Pancreas (tissue), 10 donors: ENCODE measurements at regions of chr13 and their contacts with region 1.

Region 1: GRCh38 chr13:75876360-75877050 is 240.4 kb downstream of the LMO7 start:
- DNase-seq: peak in 4 of 6 donors; percentile 23 to 66 (median 34)
- ATAC-seq: peak; percentile 91 to 98 (median 94)
- H3K4me3 ChIP-seq: no peak overlapping the region
- H3K27ac ChIP-seq: no peak overlapping the region
- H3K4me1 ChIP-seq: no peaks in the 10 kb centered on the region
- H3K27me3 ChIP-seq: no peaks in the 10 kb centered on the region
- CTCF ChIP-seq: peak; percentile 62 to 93 (median 86)

Region 2: GRCh38 chr13:76148926-76149325 is 272.4 kb after region 1 on chr13:
- intact Hi-C with region 1: no loop called
- DNase-seq: no peak
- ATAC-seq: peak in 1 of 4 donors; percentile 23
- H3K4me3 ChIP-seq: no peak overlapping the region
- H3K27ac ChIP-seq: no peak overlapping the region
- H3K4me1 ChIP-seq: no peaks in the 10 kb centered on the region
- H3K27me3 ChIP-seq: no peaks in the 10 kb centered on the region
- CTCF ChIP-seq: no peak

Region 3: GRCh38 chr13:76466043-76466442 is 589.5 kb after region 1 on chr13:
- intact Hi-C with region 1: loop called (anchors 5 to 10 kb)
- DNase-seq: no peak
- ATAC-seq: no peak
- H3K4me3 ChIP-seq: no peak overlapping the region
- H3K27ac ChIP-seq: no peak overlapping the region
- H3K4me1 ChIP-seq: no peaks in the 10 kb centered on the region
- H3K27me3 ChIP-seq: no peaks in the 10 kb centered on the region
- CTCF ChIP-seq: no peak

Region 4: GRCh38 chr13:76473552-76474134 is 597.1 kb after region 1 on chr13:
- intact Hi-C with region 1: loop called (anchors 5 to 10 kb)
- DNase-seq: peak in 5 of 6 donors; percentile 54 to 81 (median 57)
- ATAC-seq: peak; percentile 88 to 99 (median 98)
- H3K4me3 ChIP-seq: no peak overlapping the region
- H3K27ac ChIP-seq: no peak overlapping the region
- H3K4me1 ChIP-seq: no peaks in the 10 kb centered on the region
- H3K27me3 ChIP-seq: no peaks in the 10 kb centered on the region
- CTCF ChIP-seq: peak; percentile 74 to 89 (median 82)

Region 5: GRCh38 chr13:76903544-76904162 is 1027.1 kb after region 1 on chr13:
- intact Hi-C with region 1: loop called in 2 of 3 experiments (anchors 10 kb)
- DNase-seq: peak in 5 of 6 donors; percentile 24 to 67 (median 45)
- ATAC-seq: peak; percentile 80 to 99 (median 94)
- H3K4me3 ChIP-seq: no peak overlapping the region
- H3K27ac ChIP-seq: no peak overlapping the region
- H3K4me1 ChIP-seq: no peaks in the 10 kb centered on the region
- H3K27me3 ChIP-seq: peaks cover 0 to 5% (median 0%) of the 10 kb centered on the region in 4 donors
- CTCF ChIP-seq: peak; percentile 88 to 97 (median 96)